ENCODE measurements at regions of chr14 and their contacts with region 1.

Region 1: DNA sequence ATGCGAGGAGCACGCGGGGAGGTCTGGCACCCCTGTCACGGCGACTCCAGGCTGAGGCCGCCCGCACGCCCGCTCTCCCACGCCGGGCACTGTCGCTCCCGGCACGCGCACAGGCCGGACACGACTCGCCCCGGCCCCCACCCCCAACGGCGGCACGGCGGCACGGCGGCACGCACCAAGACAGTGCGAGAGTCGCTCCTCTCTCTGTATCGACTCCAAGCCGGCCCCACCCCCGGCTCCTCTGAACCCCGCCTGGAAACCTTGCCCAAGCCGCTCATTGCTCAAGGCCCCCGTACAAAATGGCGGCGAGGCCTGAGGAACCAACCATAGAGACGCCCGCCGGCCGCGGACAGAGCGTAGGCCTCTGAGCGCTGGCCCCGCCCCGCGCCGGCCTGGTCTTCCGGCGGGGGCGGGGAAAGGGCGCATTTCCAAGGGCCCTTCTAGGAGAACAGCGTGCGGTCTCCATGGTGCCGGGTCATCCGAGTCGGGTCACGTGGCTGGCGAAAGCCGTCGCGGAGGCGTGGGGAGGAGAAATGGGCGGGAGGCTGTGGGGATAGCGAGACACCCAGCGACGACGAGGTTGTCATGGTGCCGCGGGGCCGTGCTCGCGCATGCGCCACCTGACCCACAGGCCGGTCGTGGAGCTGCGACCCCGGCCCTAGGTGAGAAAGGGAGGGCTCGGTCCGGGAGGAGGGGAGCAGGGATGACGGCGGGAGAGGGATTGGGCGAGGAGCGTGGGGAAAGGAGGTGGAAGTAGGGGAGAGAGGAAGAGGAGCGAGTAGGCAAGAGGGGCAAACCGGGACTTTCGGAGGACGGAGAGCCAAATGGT is at the start of gene CIPC:
- DNase-seq: peak; percentile 100
- H3K4me3 ChIP-seq: peak within 1 kb of the TSS; percentile 67 to 92 (median 86)
- H3K27ac ChIP-seq: peak within 1 kb of the TSS; percentile 90 to 100 (median 96)
- H3K4me1 ChIP-seq: peaks cover 0 to 56% (median 50%) of the 10 kb centered on the region in 4 donors
- H3K27me3 ChIP-seq: no peaks in the 10 kb centered on the region
- CTCF ChIP-seq: no peak
- EP300 ChIP-seq: peak in 1 of 4 donors; percentile 86
- POLR2A ChIP-seq: peak; percentile 87 to 91
- total RNA-seq, gene CIPC: 59.7 to 96.1 (median 77.7) TPM

Region 2: GRCh38 chr14:76956316-76957090 is 141.4 kb before region 1 on chr14:
- intact Hi-C with region 1: loop called (anchors 5 kb)
- DNase-seq: peak; percentile 95
- H3K4me3 ChIP-seq: peak overlapping the region; percentile 21 to 50 (median 42)
- H3K27ac ChIP-seq: peak overlapping the region; percentile 91 to 97 (median 96)
- H3K4me1 ChIP-seq: peaks cover 0 to 83% (median 77%) of the 10 kb centered on the region in 4 donors
- H3K27me3 ChIP-seq: no peaks in the 10 kb centered on the region
- CTCF ChIP-seq: peak in 3 of 4 experiments; percentile 27 to 33 (median 27)
- EP300 ChIP-seq: peak in 2 of 4 donors; percentile 22
- POLR2A ChIP-seq: no peak

Region 3: DNA sequence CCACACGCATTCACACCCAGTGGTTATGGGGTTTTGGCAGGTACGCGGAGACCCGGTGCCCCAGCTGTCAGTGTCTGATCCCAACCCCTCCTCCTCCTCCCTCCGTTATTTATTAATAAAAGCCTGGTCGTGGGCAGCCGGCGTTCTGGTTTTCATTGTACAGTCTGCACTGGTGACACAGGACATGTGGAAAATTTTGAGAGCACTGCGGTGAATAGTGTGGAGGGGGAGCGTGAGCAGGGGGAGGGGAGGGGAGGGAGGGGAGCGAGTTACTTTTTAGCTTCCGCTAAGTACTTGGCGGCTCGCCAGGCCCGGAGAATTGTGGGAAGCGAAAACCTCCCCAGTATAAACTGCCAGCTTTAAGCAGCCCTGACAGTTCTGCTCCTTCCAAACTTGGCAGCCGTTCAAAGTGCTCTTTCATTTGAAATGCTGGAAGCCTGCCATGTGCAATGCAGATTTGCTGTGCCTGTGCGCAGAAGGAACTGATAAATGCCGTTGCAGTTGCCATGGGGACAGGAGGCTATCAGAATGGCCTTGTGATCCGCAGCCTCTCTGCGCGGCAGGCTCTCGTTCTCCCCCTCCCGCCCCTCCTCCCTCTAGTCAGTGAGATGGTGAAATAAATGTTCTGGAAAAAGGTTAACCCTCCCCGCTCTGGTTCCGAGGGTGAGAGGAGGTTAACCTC is 57.7 kb before region 1 on chr14:
- intact Hi-C with region 1: loop called (anchors 5 kb)
- DNase-seq: peak; percentile 100
- H3K4me3 ChIP-seq: peak overlapping the region; percentile 6 to 37 (median 32)
- H3K27ac ChIP-seq: peak overlapping the region; percentile 96 to 100 (median 98)
- H3K4me1 ChIP-seq: peaks cover 0 to 90% (median 86%) of the 10 kb centered on the region in 4 donors
- H3K27me3 ChIP-seq: no peaks in the 10 kb centered on the region
- CTCF ChIP-seq: no peak
- EP300 ChIP-seq: peak; percentile 41 to 70 (median 54)
- POLR2A ChIP-seq: no peak

Region 4: DNA sequence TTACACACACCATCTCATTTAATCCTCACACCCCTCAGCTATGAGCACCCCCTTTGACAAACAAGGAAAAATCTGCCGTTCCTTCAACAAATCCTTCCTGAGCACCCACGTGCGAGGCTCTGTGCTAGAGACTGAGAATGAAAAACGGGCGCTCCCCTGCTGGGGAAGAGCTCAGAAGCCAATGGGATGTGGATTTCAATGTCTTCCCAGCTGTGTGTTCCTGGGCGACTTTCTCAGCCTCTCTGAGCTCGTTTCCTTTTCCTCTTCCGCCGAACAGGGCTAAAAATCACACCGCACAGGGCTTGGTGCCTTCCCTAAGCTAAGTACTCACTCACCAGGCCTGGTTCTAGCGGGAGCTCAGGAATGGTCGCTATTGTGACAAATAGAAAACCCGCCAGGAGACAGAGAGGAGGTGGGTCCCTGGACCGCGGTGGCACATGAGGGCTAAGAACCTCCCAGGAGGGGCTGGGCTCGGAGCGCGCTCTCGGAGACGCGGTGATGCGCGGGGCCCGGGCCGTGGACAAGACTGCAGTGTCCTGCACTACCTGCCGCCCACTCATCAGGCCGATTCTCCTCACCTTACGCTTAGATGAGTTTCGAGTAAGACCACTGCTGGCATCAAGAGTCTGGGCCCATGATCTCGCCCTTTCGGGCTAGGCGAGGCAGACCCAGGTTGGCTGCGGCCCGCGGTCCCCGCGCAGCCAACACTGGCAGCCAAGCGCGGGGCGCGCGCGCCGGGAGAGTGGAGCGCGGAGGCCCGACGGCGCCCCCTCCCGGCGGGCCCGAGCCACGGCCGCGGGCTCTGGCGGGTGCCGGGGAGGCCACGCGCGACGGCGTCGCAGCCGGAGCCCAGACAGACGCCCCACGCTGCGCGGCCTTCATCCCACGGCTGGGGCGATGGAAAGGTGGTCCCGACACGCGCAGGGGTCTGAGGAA is 26.7 kb after region 1 on chr14:
- intact Hi-C with region 1: loop called (anchors 2 kb)
- DNase-seq: no peak
- H3K4me3 ChIP-seq: peak overlapping the region; percentile 50 to 55 (median 54)
- H3K27ac ChIP-seq: peak overlapping the region; percentile 14 to 55 (median 33)
- H3K4me1 ChIP-seq: peaks cover 0 to 37% (median 35%) of the 10 kb centered on the region in 4 donors
- H3K27me3 ChIP-seq: peaks cover 0 to 20% (median 0%) of the 10 kb centered on the region in 3 donors
- CTCF ChIP-seq: peak in 2 of 4 experiments; percentile 19 to 78
- EP300 ChIP-seq: no peak
- POLR2A ChIP-seq: no peak